ENCODE measurements at regions of chr10 and their contacts with region 1.

Region 1: DNA sequence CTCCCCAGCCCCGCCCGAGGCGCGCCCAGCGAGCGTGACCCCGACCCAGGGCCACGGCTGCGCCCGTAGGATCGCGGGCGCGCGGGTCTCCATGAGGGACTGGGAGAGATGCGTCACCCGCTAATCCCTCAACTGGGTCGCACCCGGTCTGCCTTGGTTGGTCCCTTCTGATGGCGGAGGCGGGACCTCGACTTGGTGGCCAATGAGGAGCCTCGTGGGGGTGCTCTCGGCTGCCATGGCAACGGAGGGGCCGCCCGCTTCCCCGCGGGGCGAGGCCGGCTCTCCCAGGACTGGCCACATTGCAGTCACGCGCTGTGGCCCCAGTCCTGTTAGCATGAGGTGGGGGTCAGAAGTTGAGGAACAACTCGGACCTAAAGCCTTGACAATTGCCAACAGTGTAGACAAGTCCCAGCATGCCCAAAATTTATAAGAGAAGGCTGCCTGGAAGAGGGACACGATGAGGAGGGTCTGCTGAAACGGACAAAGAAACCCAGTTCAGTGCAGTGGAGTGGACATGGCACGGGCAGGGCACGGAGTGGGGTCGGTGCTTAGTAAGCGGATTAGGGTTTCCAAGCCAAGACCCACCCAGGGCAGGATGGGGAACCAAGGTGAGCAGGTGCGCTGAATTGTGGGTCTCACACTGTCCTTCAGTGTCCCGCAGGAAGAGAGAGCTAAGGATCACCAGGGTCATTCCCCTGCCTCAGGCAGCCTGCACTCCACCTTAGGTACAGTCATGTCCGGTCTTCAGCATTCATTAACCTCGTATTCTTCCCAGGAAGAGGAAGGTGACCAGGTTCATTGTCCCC is 24.4 kb downstream of the DDIT4 start:
- DNase-seq: peak; percentile 72 to 94 (median 87)
- H3K4me3 ChIP-seq: peak overlapping the region; percentile 57
- H3K4me3 Mint-ChIP-seq: peak overlapping the region; percentile 76 to 89 (median 85)
- H3K27ac ChIP-seq: peak overlapping the region; percentile 98
- H3K27ac Mint-ChIP-seq: peak overlapping the region; percentile 97 to 100 (median 99)
- H3K4me1 ChIP-seq: peaks cover 54% of the 10 kb centered on the region
- H3K4me1 Mint-ChIP-seq: peaks cover 36 to 60% (median 41%) of the 10 kb centered on the region in 3 donors
- H3K27me3 ChIP-seq: no peaks in the 10 kb centered on the region
- H3K27me3 Mint-ChIP-seq: peaks cover 0 to 4% of the 10 kb centered on the region in 2 donors

Region 2: DNA sequence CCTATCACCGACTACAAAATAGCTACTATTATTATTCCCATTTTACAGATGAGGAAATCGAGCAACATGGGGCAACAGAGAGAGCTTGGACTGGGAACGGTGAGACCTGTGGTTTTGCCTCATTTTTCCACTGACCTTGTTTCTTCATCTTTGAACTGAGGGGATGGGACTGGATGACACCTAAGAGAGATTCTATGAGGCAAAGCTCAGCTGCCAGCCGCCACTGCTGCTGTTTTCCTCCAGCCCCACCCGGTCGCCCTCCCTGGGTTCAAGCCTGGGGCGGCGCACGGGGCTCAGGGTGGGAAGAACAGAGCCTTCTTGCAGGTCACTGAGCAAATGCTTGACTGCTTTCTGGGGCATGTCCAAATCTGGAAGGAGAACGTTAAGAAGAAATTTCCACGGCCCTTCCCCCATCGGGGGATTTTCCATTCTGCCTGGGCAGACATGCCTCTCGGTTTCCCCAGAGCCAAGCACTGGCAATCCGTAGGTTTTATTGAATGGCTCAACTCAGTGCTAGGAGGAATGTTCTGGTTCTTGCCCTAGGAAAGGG is 12.1 kb before region 1 on chr10:
- CTCF ChIA-PET with region 1: no interaction called
- POLR2A ChIA-PET with region 1: no interaction called
- DNase-seq: no peak
- H3K4me3 ChIP-seq: peak overlapping the region; percentile 11
- H3K4me3 Mint-ChIP-seq: no peak overlapping the region
- H3K27ac ChIP-seq: no peak overlapping the region
- H3K27ac Mint-ChIP-seq: peak overlapping the region in 6 of 8 donors; percentile 52 to 85 (median 58)
- H3K4me1 ChIP-seq: peaks cover 27% of the 10 kb centered on the region
- H3K4me1 Mint-ChIP-seq: peaks cover 26 to 39% (median 37%) of the 10 kb centered on the region in 3 donors
- H3K27me3 ChIP-seq: no peaks in the 10 kb centered on the region
- H3K27me3 Mint-ChIP-seq: no peaks in the 10 kb centered on the region

Region 3: GRCh38 chr10:72319416-72320254 is 21.5 kb after region 1 on chr10:
- CTCF ChIA-PET with region 1: interaction called, 9 read pairs
- POLR2A ChIA-PET with region 1: interaction called, 30 read pairs
- DNase-seq: peak; percentile 80 to 92 (median 89)
- H3K4me3 ChIP-seq: peak overlapping the region; percentile 61
- H3K4me3 Mint-ChIP-seq: peak overlapping the region; percentile 78 to 92 (median 82)
- H3K27ac ChIP-seq: peak overlapping the region; percentile 89
- H3K27ac Mint-ChIP-seq: peak overlapping the region; percentile 76 to 100 (median 99)
- H3K4me1 ChIP-seq: peaks cover 89% of the 10 kb centered on the region
- H3K4me1 Mint-ChIP-seq: peaks cover 66 to 88% (median 70%) of the 10 kb centered on the region in 3 donors
- H3K27me3 ChIP-seq: no peaks in the 10 kb centered on the region
- H3K27me3 Mint-ChIP-seq: peaks cover 0 to 1% of the 10 kb centered on the region in 2 donors

Region 4: GRCh38 chr10:72342911-72343310 is 44.7 kb after region 1 on chr10:
- CTCF ChIA-PET with region 1: no interaction called
- POLR2A ChIA-PET with region 1: no interaction called
- DNase-seq: no peak
- H3K4me3 ChIP-seq: no peak overlapping the region
- H3K4me3 Mint-ChIP-seq: no peak overlapping the region
- H3K27ac ChIP-seq: no peak overlapping the region
- H3K27ac Mint-ChIP-seq: no peak overlapping the region
- H3K4me1 ChIP-seq: peaks cover 15% of the 10 kb centered on the region
- H3K4me1 Mint-ChIP-seq: peaks cover 0 to 28% (median 12%) of the 10 kb centered on the region in 3 donors
- H3K27me3 ChIP-seq: no peaks in the 10 kb centered on the region
- H3K27me3 Mint-ChIP-seq: no peaks in the 10 kb centered on the region